Transverse colon (tissue), 4 donors: ENCODE measurements at regions of chr19 and their contacts with region 1.

Region 1: DNA sequence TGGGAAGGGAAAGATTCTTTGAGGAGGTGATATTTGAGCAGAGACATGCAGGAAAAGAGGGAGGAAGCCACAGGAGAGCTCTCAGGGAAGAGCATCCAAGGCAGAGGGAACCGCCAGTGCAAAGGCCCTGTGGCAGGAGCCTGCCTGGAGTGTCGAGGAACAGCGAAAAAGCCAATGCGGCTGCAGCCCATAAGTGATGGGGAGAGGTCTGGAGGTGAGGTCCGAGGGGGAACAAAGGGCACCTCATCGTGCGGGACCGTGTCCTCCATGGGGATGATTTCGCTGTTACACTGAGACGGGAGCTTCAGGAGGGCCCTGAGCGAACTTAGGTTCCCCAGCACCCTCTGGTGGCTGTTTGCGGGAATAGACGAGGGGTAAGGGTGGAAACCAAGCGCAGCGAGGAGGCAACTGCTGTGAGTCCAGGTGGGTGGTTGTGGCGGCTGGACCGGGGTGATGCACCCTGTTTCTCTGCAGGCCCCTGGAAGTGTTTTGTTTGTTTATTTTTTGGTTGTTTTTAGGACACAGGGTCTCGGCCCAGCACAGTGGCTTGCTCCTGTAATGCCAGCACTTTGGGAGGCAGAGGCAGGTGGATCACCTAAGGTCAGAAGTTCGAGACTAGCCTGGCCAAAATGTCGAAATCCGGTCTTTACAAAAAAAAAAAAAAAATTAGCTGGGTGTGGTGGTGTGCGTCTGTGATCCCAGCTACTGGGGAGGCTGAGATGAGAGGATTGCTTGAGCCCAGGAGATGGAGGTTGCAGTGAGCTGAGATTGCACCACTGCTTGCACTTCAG is 5.9 kb upstream of the EHD2 start:
- DNase-seq: peak; percentile 82
- H3K4me3 ChIP-seq: no peak overlapping the region
- H3K27ac ChIP-seq: no peak overlapping the region
- H3K4me1 ChIP-seq: peaks cover 0 to 13% (median 7%) of the 10 kb centered on the region in 4 donors
- H3K27me3 ChIP-seq: peaks cover 17% of the 10 kb centered on the region
- CTCF ChIP-seq: peak; percentile 81 to 88 (median 83)
- EP300 ChIP-seq: no peak
- POLR2A ChIP-seq: no peak

Region 2: DNA sequence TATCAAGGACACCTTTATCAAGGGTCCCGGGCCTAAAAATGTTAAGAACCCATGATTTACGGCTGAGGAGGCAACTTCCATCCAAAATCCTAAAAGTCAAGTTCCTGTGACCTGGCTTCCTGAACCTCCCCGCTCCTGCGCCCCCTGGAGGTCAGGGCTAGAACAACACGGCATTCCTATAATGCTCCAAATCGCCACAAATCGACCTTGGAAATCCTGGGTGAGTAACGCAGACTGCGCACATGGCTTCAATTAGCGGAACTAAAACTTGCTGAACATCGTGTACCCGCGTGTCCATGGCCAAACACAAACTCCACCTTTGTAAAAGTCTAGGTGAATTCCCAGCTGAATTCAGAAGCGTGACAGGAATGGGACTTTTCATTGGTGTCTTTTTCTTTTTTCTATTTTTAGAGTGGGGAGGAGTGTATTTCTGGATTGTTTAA is 402.0 kb before region 1 on chr19:
- in situ Hi-C with region 1: loop called in 1 of 4 experiments (anchors 25 kb)
- intact Hi-C with region 1: no loop called
- DNase-seq: peak; percentile 76
- H3K4me3 ChIP-seq: no peak overlapping the region
- H3K27ac ChIP-seq: no peak overlapping the region
- H3K4me1 ChIP-seq: peaks cover 0 to 6% (median 0%) of the 10 kb centered on the region in 4 donors
- H3K27me3 ChIP-seq: no peaks in the 10 kb centered on the region
- CTCF ChIP-seq: peak; percentile 86 to 95 (median 93)
- EP300 ChIP-seq: no peak
- POLR2A ChIP-seq: no peak

Region 3: DNA sequence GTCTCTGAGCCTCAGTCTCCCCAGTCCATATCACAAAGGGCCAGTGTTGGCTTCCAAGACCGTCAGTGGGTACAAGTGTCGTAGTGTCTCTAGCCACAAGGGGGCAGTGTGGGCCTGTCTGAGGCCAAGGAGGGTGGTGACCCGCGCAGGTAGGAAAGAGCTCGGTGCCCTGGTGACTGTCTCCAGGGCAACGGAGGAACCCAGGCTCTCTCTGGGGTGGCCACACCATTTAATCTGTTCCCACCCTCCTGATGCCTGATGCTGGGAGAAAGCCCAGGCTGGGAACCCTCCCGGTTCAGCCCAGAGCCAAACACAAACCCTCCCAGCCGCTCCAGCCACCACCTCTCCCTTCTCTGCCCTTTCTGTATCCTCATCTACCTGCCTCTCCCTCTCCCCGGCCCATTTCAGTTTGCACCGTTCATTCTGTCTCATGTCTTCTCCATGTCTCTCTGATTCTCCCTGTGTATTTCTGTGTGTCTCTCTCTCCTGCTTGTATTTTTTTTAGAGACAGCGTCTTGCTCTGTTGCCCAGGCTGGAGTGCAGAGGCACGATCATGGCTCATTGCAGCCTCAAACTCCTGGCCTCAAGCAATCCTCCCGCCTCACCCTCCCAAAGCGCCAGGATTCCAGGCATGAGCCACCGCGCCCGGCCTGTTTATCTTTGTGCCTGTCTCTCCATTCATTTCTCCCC is 270.5 kb before region 1 on chr19:
- in situ Hi-C with region 1: loop called in 3 of 4 experiments (anchors 5 to 10 kb)
- intact Hi-C with region 1: loop called (anchors 2 kb)
- DNase-seq: peak; percentile 85
- H3K4me3 ChIP-seq: no peak overlapping the region
- H3K27ac ChIP-seq: no peak overlapping the region
- H3K4me1 ChIP-seq: no peaks in the 10 kb centered on the region
- H3K27me3 ChIP-seq: peaks cover 57% of the 10 kb centered on the region
- CTCF ChIP-seq: peak; percentile 88 to 93 (median 90)
- EP300 ChIP-seq: no peak
- POLR2A ChIP-seq: no peak